K562 (cell line): ENCODE measurements at regions of chr22 and their contacts with region 1.

Region 1: GRCh38 chr22:18077639-18078328 is at the start of gene PEX26:
- DNase-seq: peak; percentile 94 to 98 (median 95)
- ATAC-seq: peak; percentile 99
- H3K4me3 ChIP-seq: peak within 1 kb of the TSS; percentile 84
- H3K27ac ChIP-seq: peak within 1 kb of the TSS; percentile 70
- H3K4me1 ChIP-seq: peaks cover 5 to 9% of the 10 kb centered on the region in 2 experiments; a peak in 4 of 5 replicates
- H3K27me3 ChIP-seq: no peaks in the 10 kb centered on the region
- CTCF ChIP-seq: peak in 1 of 3 experiments; percentile 15; a peak in 2 of 6 replicates
- EP300 ChIP-seq: no peak
- POLR2A ChIP-seq: peak; percentile 86
- RAD21 ChIP-seq: no peak
- polyA plus RNA-seq, gene PEX26: 0.35 to 0.72 TPM

Region 2: GRCh38 chr22:17552737-17553136 is 525.0 kb before region 1 on chr22:
- CTCF ChIA-PET with region 1: no interaction called
- POLR2A ChIA-PET with region 1: no interaction called
- in situ Hi-C with region 1: loop called (anchors 10 kb)
- intact Hi-C with region 1: no loop called
- DNase-seq: no peak
- ATAC-seq: no peak
- H3K4me3 ChIP-seq: no peak overlapping the region
- H3K27ac ChIP-seq: no peak overlapping the region
- H3K4me1 ChIP-seq: 0 out of 5 replicates have a peak, but pooled peaks cover 0 to 4% of the 10 kb centered on the region in 2 experiments
- H3K27me3 ChIP-seq: peaks cover 58 to 67% of the 10 kb centered on the region in 2 experiments
- CTCF ChIP-seq: no peak
- EP300 ChIP-seq: no peak
- POLR2A ChIP-seq: no peak
- RAD21 ChIP-seq: no peak

Region 3: DNA sequence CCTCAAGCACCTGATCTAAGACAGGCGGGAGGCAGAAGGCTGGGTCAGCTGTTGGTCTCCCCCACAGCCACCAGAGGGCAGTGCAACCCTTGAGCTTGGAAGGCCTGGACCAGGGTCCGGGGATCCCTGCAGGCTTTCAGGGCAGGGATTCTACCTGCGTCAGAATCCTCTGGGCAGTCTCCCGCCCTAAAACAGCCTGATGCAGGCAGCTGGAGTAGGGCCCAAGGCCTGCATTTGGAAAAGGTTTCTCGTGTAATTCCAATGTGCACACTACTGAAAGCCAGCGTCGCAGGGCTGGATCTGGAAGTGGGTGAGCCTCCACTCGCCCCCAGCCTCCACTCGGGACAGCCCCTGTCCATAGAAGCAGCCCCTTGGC is 335.3 kb before region 1 on chr22:
- CTCF ChIA-PET with region 1: interaction called, 8 read pairs
- POLR2A ChIA-PET with region 1: interaction called, 3 read pairs
- in situ Hi-C with region 1: no loop called
- intact Hi-C with region 1: loop called (anchors 1 kb)
- DNase-seq: peak; percentile 89 to 94 (median 92)
- ATAC-seq: peak; percentile 98
- H3K4me3 ChIP-seq: no peak overlapping the region
- H3K27ac ChIP-seq: no peak overlapping the region
- H3K4me1 ChIP-seq: peaks cover 0 to 18% of the 10 kb centered on the region in 2 experiments; a peak in 2 of 5 replicates
- H3K27me3 ChIP-seq: no peaks in the 10 kb centered on the region
- CTCF ChIP-seq: peak; percentile 89 to 95 (median 93)
- EP300 ChIP-seq: no peak
- POLR2A ChIP-seq: no peak
- RAD21 ChIP-seq: peak; percentile 74 to 93

Region 4: DNA sequence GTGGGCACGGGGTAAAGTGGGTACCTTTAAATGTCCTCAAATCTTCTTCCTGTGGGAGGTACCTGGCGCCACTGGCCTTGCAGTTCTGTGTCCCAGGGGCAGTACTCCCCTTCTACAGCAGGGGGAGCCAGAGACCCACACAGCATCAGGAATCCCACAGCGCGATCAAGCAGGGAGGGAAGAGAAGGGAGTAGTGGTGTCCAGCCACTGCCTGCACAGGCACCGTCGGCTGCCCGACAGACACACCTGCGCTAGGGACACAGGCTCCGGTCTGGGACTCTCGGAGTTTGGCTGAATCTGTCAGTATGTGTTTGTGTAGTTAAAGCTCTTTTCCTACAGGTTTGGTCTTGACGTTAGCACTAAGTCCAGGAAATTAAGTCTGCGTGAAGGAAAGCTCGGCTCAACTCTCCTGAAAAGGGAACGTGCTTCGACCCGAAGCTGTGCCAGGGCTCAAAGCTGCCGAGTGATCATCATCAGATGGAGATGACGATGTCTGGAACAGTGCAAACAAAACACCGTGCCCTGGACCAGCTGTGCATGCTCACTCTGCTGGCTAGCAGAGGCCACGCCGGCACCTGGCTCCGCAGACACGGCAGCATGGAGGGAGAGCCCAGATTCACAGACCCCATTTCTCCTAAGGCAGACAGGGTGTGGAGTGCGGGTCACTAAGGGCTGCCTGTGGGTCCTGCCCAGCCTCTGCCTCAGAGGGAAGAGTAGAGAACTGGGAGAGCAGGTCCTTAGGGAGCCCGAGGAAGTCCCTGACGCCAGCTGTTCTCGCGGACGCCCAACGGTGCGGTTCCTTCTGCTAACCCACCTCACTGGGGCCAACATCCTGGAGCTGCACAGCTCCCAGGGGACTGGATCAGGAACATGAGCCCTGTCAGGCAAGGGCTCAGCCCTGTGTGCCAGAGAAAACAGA is 247.5 kb before region 1 on chr22:
- CTCF ChIA-PET with region 1: interaction called, 82 read pairs
- POLR2A ChIA-PET with region 1: interaction called, 16 read pairs
- in situ Hi-C with region 1: loop called (anchors 5 kb)
- intact Hi-C with region 1: loop called (anchors 1 kb)
- DNase-seq: peak; percentile 89 to 91 (median 90)
- ATAC-seq: peak; percentile 97
- H3K4me3 ChIP-seq: no peak overlapping the region
- H3K27ac ChIP-seq: no peak overlapping the region
- H3K4me1 ChIP-seq: peaks cover 0 to 8% of the 10 kb centered on the region in 2 experiments; a peak in 1 of 5 replicates
- H3K27me3 ChIP-seq: no peaks in the 10 kb centered on the region
- CTCF ChIP-seq: peak; percentile 97 to 99 (median 98)
- EP300 ChIP-seq: no peak
- POLR2A ChIP-seq: no peak
- RAD21 ChIP-seq: peak; percentile 95 to 99

Region 5: GRCh38 chr22:17920145-17920605 is 157.6 kb before region 1 on chr22:
- CTCF ChIA-PET with region 1: no interaction called
- POLR2A ChIA-PET with region 1: no interaction called
- in situ Hi-C with region 1: no loop called
- intact Hi-C with region 1: loop called (anchors 2 kb)
- DNase-seq: peak; percentile 71 to 94 (median 82)
- ATAC-seq: peak; percentile 92
- H3K4me3 ChIP-seq: peak overlapping the region; percentile 2; the same call in 1 of the 2 replicates
- H3K27ac ChIP-seq: peak overlapping the region; percentile 27; the same call in 1 of the 3 replicates
- H3K4me1 ChIP-seq: peaks cover 58 to 67% of the 10 kb centered on the region in 2 experiments
- H3K27me3 ChIP-seq: no peaks in the 10 kb centered on the region
- CTCF ChIP-seq: peak in 1 of 3 experiments; percentile 33; a peak in 2 of 6 replicates
- EP300 ChIP-seq: peak; percentile 49; the same call in 1 of the 2 replicates
- POLR2A ChIP-seq: no peak
- RAD21 ChIP-seq: peak in 1 of 2 experiments; percentile 44; a peak in 2 of 4 replicates

Region 6: GRCh38 chr22:18001040-18001893 is 76.5 kb before region 1 on chr22:
- CTCF ChIA-PET with region 1: interaction called, 9 read pairs
- POLR2A ChIA-PET with region 1: interaction called, 3 read pairs
- in situ Hi-C with region 1: no loop called
- intact Hi-C with region 1: loop called (anchors 2 kb)
- DNase-seq: peak; percentile 98 to 100 (median 100)
- ATAC-seq: peak; percentile 95
- H3K4me3 ChIP-seq: peak overlapping the region; percentile 95
- H3K27ac ChIP-seq: peak overlapping the region; percentile 100
- H3K4me1 ChIP-seq: peaks cover 12 to 24% of the 10 kb centered on the region in 2 experiments; a peak in 4 of 5 replicates
- H3K27me3 ChIP-seq: no peaks in the 10 kb centered on the region
- CTCF ChIP-seq: peak; percentile 55 to 74 (median 62)
- EP300 ChIP-seq: peak; percentile 4; the same call in 1 of the 2 replicates
- POLR2A ChIP-seq: peak; percentile 88
- RAD21 ChIP-seq: peak; percentile 58 to 61